ENCODE measurements at regions of chr16 and their contacts with region 1.

Region 1: GRCh38 chr16:24504472-24505345 is 34.7 kb upstream of the RBBP6 start:
- DNase-seq: peak; percentile 67 to 81 (median 70)
- H3K4me3 ChIP-seq: no peak overlapping the region
- H3K27ac ChIP-seq: no peak overlapping the region
- H3K4me1 ChIP-seq: no peaks in the 10 kb centered on the region
- H3K27me3 ChIP-seq: peaks cover 0 to 2% (median 0%) of the 10 kb centered on the region in 5 experiments

Region 2: GRCh38 chr16:24041826-24042631 is 462.7 kb before region 1 on chr16:
- CTCF ChIA-PET with region 1: interaction called, 26 read pairs
- POLR2A ChIA-PET with region 1: no interaction called
- DNase-seq: peak; percentile 54 to 75 (median 69)
- H3K4me3 ChIP-seq: no peak overlapping the region
- H3K27ac ChIP-seq: no peak overlapping the region
- H3K4me1 ChIP-seq: no peaks in the 10 kb centered on the region
- H3K27me3 ChIP-seq: no peaks in the 10 kb centered on the region

Region 3: GRCh38 chr16:24318670-24319069 is 186.0 kb before region 1 on chr16:
- CTCF ChIA-PET with region 1: no interaction called
- POLR2A ChIA-PET with region 1: no interaction called
- DNase-seq: no peak
- H3K4me3 ChIP-seq: no peak overlapping the region
- H3K27ac ChIP-seq: no peak overlapping the region
- H3K4me1 ChIP-seq: no peaks in the 10 kb centered on the region
- H3K27me3 ChIP-seq: peaks cover 0 to 31% (median 2%) of the 10 kb centered on the region in 5 experiments

Region 4: GRCh38 chr16:24516900-24517669 is 12.4 kb after region 1 on chr16:
- CTCF ChIA-PET with region 1: interaction called, 39 read pairs
- POLR2A ChIA-PET with region 1: no interaction called
- DNase-seq: peak; percentile 79 to 85 (median 81)
- H3K4me3 ChIP-seq: peak overlapping the region in 2 of 7 experiments; percentile 42 to 59
- H3K27ac ChIP-seq: no peak overlapping the region
- H3K4me1 ChIP-seq: no peaks in the 10 kb centered on the region
- H3K27me3 ChIP-seq: no peaks in the 10 kb centered on the region

Measured in common myeloid progenitor, CD34-positive (primary cell).